ENCODE measurements at regions of chr1 and their contacts with region 1.

Region 1: DNA sequence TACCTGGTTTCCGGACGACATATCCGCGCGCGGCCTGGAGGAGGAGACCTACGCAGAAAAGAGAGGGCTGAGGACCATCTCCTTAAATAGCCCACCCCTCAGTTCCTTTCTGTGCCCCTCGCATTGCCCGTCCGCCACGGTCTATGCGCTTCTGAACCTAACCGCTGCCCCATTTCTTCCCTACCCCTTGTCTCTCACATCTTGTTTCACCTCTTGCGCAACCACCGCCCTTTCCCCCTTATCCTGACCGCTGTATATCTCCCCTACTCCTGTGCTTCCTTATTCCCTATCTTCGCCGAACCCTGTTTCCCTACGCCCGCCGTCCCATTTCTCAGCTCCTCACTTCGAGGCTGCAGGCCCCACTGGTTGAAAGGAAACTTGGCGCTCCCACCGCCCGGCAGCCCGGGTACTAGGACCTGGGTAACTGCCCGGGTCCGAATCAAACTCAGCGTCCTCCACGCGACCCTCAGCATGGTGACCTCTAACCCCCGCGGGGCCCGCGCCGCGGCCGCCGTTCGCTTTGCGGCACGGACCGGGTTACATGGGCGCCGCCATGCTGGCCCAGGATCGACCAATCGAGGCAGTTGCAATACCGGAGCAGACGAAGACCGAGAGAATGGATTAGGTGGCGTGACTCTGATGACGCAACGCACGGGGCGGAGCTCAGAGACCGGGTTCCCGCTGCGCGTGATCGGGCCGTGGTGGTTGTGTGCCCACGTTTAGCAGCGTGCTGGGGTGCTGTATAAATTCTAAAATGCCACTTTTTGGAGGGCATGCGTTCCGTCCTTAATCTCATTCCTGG is at the start of gene MRPS15:
- DNase-seq: peak; percentile 84 to 97 (median 93)
- ATAC-seq: peak; percentile 96
- H3K4me3 ChIP-seq: peak within 1 kb of the TSS; percentile 97
- H3K4me3 Mint-ChIP-seq: peak within 1 kb of the TSS; percentile 99
- H3K27ac ChIP-seq: peak within 1 kb of the TSS; percentile 90 to 93
- H3K27ac Mint-ChIP-seq: peak within 1 kb of the TSS; percentile 99
- H3K4me1 ChIP-seq: peaks cover 25% of the 10 kb centered on the region
- H3K4me1 Mint-ChIP-seq: peaks cover 31% of the 10 kb centered on the region
- H3K27me3 ChIP-seq: no peaks in the 10 kb centered on the region
- H3K27me3 Mint-ChIP-seq: no peaks in the 10 kb centered on the region
- CTCF ChIP-seq: no peak
- total RNA-seq, gene MRPS15: 35.4 to 36.4 TPM

Region 2: DNA sequence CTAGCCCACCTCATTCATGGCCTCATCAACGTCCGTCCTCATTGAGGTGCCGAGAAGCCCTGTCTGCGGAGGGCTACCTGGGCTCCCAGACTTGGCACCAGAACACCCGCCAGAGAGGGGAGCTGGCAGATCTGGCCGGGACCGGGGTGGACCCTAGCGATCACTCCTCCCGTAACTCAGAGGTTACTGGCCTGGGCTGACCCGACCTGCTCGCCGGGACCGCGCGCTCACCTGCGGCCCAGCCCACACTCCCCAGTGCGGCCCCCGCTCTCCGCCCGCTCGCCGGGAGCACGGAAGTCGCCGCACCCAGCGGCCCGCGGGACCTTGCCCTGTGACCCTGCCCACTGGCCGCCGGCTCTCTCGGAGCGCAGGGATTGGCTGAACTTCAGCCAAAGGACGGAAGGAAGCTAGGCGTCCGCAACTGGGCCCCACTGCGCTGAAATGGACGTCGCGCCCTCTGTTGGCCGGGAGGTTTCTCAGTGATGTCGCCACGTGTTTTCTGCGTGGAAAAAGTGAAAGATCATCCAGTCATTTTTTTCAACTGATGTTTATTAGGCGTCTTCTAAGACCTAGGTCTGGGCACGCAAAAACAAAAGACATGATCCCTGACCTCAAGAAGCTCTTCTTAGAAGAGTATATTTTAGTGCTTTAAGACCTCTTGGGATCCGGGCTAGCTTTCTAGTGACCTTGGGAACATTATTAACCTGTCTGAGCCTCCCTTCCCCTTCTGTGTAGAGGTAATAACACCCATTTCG is 1604.4 kb before region 1 on chr1 and contains the start of gene SMIM12:
- CTCF ChIA-PET with region 1: no interaction called
- POLR2A ChIA-PET with region 1: no interaction called
- intact Hi-C with region 1: loop called in 1 of 2 experiments (anchors 10 kb)
- DNase-seq: peak; percentile 75 to 94 (median 88)
- ATAC-seq: peak; percentile 83
- H3K4me3 ChIP-seq: peak within 1 kb of the TSS; percentile 98
- H3K4me3 Mint-ChIP-seq: peak within 1 kb of the TSS; percentile 93
- H3K27ac ChIP-seq: peak within 1 kb of the TSS; percentile 80 to 91
- H3K27ac Mint-ChIP-seq: peak within 1 kb of the TSS; percentile 88
- H3K4me1 ChIP-seq: peaks cover 48% of the 10 kb centered on the region
- H3K4me1 Mint-ChIP-seq: peaks cover 68% of the 10 kb centered on the region
- H3K27me3 ChIP-seq: no peaks in the 10 kb centered on the region
- H3K27me3 Mint-ChIP-seq: no peaks in the 10 kb centered on the region
- CTCF ChIP-seq: peak; percentile 83
- total RNA-seq, gene SMIM12: 43.0 to 44.6 TPM

Region 3: DNA sequence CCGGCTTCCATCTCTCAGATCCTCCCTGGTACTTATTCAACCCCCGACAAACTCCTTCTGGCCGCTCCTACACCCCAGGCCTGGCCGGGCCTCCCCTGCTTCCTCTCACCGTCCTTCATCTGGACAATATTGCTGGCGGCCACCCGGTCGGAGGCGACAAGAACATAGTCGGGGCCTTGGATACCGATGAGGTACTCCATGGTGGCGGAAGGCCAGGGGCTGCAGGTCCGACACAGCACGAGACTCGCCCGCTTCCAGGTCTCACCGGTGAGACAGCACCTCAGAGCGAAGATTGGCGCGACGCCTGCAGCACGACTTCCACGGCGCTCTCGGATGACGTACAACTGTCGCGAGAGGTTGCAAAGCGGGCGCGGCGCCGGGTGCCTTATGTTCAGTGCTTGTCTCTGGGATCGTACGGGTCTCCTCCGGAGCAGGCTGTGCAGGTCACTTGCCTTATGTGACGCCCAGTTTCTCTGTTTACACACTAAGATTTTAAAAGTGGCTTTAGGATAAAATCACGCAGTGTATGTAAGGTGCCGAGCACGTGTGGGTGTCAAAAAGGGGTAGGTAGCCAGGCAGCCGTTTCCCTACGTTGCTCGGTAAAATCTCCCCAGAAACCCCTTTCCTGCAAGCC is 822.7 kb before region 1 on chr1 and contains the start of gene PSMB2:
- CTCF ChIA-PET with region 1: no interaction called
- POLR2A ChIA-PET with region 1: no interaction called
- intact Hi-C with region 1: loop called in 1 of 2 experiments (anchors 10 kb)
- DNase-seq: peak; percentile 92 to 98 (median 96)
- ATAC-seq: peak; percentile 89
- H3K4me3 ChIP-seq: peak within 1 kb of the TSS; percentile 83
- H3K4me3 Mint-ChIP-seq: peak within 1 kb of the TSS; percentile 99
- H3K27ac ChIP-seq: peak within 1 kb of the TSS; percentile 63 to 73
- H3K27ac Mint-ChIP-seq: peak within 1 kb of the TSS; percentile 98
- H3K4me1 ChIP-seq: peaks cover 15% of the 10 kb centered on the region
- H3K4me1 Mint-ChIP-seq: peaks cover 47% of the 10 kb centered on the region
- H3K27me3 ChIP-seq: peaks cover 0 to 16% of the 10 kb centered on the region in 2 experiments
- H3K27me3 Mint-ChIP-seq: peaks cover 35% of the 10 kb centered on the region
- CTCF ChIP-seq: no peak
- total RNA-seq, gene PSMB2: 34.0 to 35.3 TPM

Region 4: DNA sequence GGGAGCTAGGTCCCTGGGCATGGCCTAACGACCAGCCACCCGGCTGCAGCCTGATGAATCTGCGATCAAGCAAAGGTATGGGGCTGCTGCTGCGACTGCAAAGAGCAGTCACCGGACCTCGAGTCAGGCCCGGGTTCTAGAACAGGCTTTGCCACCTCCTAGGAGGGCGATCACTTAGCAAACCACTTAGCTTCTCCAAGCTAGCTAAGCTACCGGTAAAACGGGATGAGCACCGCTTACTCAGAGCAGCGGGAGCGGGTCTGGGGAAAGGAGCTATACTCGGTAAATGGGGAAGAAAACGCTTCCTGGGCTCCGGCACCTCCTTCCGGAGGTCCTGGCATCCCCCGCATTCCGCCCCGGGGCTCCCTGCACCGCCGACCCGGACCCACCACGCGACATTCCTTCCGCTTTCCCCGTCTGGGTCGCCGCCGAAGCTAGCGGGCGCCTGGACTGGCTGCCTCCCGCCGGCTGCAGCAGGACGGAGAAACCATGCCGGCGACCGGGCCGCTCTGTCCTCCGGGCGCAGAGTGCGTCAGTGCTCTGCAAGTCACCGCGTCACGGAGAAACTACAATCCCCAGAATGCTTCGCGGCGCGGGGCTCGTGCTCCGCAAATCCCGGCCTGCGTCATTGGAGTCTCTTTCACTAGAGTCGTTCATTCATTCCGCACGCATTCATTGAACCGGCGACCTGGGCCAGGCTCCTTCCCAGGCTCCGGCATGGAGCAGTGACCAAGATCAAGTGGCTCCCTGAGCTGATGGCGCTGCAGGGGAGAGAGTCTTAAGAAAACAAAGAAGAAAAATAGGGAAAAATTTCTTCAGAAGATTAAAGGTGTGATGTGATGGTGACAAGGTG is 66.4 kb before region 1 on chr1 and contains the start of gene LSM10:
- CTCF ChIA-PET with region 1: no interaction called
- POLR2A ChIA-PET with region 1: interaction called, 4 read pairs
- intact Hi-C with region 1: loop called in 1 of 2 experiments (anchors 2 kb)
- DNase-seq: peak; percentile 76 to 96 (median 88)
- ATAC-seq: peak; percentile 93
- H3K4me3 ChIP-seq: peak within 1 kb of the TSS; percentile 84
- H3K4me3 Mint-ChIP-seq: peak within 1 kb of the TSS; percentile 97
- H3K27ac ChIP-seq: peak within 1 kb of the TSS; percentile 72 to 85
- H3K27ac Mint-ChIP-seq: peak within 1 kb of the TSS; percentile 92
- H3K4me1 ChIP-seq: peaks cover 44% of the 10 kb centered on the region
- H3K4me1 Mint-ChIP-seq: peaks cover 34% of the 10 kb centered on the region
- H3K27me3 ChIP-seq: no peaks in the 10 kb centered on the region
- H3K27me3 Mint-ChIP-seq: no peaks in the 10 kb centered on the region
- CTCF ChIP-seq: no peak
- total RNA-seq, gene LSM10: 25.6 to 26.0 TPM

Region 5: DNA sequence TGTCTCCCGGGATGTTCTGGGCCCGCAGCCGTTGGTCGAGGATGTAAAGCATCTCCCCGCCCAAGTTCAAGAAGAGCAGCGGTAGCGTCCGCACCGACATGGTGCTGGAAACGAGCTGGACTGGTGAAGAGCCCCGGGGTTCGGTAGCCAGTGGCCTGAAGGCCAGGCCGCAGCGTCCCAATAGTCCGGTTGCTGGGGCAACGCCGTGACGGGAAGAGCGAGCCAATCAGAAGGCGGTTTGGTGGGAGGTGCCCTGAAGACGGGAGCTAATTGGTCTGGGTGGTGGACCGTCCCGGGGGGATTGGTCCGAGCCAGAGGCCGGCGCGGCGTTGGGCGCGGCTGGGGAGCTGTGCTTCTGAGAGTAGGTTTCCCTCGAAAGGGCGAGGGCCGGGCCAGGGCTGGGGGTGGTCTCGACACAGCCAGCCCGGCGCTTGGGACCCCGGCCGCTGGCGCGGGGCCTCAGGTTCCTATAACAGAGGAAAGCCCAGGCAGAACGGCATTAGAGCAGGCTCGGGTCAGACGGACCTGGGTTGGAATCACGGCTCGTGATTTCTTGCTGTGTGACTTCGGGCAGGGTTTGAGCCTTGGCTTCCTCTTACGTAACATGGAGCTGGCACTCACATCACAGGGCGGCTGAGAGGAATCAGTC is 13.6 kb before region 1 on chr1 and contains the start of gene OSCP1:
- CTCF ChIA-PET with region 1: interaction called, 4 read pairs
- POLR2A ChIA-PET with region 1: interaction called, 50 read pairs
- intact Hi-C with region 1: loop called (anchors 1 to 2 kb)
- DNase-seq: peak; percentile 63 to 94 (median 80)
- ATAC-seq: peak; percentile 92
- H3K4me3 ChIP-seq: peak within 1 kb of the TSS; percentile 83
- H3K4me3 Mint-ChIP-seq: peak within 1 kb of the TSS; percentile 95
- H3K27ac ChIP-seq: peak within 1 kb of the TSS; percentile 82 to 89
- H3K27ac Mint-ChIP-seq: peak within 1 kb of the TSS; percentile 91
- H3K4me1 ChIP-seq: peaks cover 15% of the 10 kb centered on the region
- H3K4me1 Mint-ChIP-seq: peaks cover 23% of the 10 kb centered on the region
- H3K27me3 ChIP-seq: no peaks in the 10 kb centered on the region
- H3K27me3 Mint-ChIP-seq: no peaks in the 10 kb centered on the region
- CTCF ChIP-seq: no peak
- total RNA-seq, gene OSCP1: 0.82 to 2.4 TPM

Measured in CD4-positive, alpha-beta T cell (primary cell).